ENCODE measurements at regions of chr6 and their contacts with region 1.

Region 1: GRCh38 chr6:165893431-165893830 is 230.4 kb upstream of the PDE10A start:
- DNase-seq: no peak
- H3K4me3 ChIP-seq: no peak overlapping the region
- H3K27ac ChIP-seq: no peak overlapping the region
- H3K4me1 ChIP-seq: peaks cover 0 to 4% (median 0%) of the 10 kb centered on the region in 4 donors
- H3K27me3 ChIP-seq: peaks cover 0 to 5% (median 0%) of the 10 kb centered on the region in 3 donors
- CTCF ChIP-seq: no peak
- EP300 ChIP-seq: no peak
- POLR2A ChIP-seq: no peak

Region 2: GRCh38 chr6:166068768-166069167 is 175.3 kb after region 1 on chr6:
- intact Hi-C with region 1: no loop called
- DNase-seq: no peak
- H3K4me3 ChIP-seq: no peak overlapping the region
- H3K27ac ChIP-seq: no peak overlapping the region
- H3K4me1 ChIP-seq: no peaks in the 10 kb centered on the region
- H3K27me3 ChIP-seq: no peaks in the 10 kb centered on the region
- CTCF ChIP-seq: no peak
- EP300 ChIP-seq: no peak
- POLR2A ChIP-seq: no peak

Region 3: GRCh38 chr6:166105341-166106075 is 212.1 kb after region 1 on chr6:
- intact Hi-C with region 1: loop called (anchors 2 kb)
- DNase-seq: no peak
- H3K4me3 ChIP-seq: no peak overlapping the region
- H3K27ac ChIP-seq: no peak overlapping the region
- H3K4me1 ChIP-seq: peaks cover 0 to 3% (median 0%) of the 10 kb centered on the region in 4 donors
- H3K27me3 ChIP-seq: peaks cover 0 to 4% (median 0%) of the 10 kb centered on the region in 3 donors
- CTCF ChIP-seq: no peak
- EP300 ChIP-seq: no peak
- POLR2A ChIP-seq: no peak

Measured in stomach (tissue), 19 donors.